Naive thymus-derived CD8-positive, alpha-beta T cell (primary cell): ENCODE measurements at regions of chr19 and their contacts with region 1.

Region 1: DNA sequence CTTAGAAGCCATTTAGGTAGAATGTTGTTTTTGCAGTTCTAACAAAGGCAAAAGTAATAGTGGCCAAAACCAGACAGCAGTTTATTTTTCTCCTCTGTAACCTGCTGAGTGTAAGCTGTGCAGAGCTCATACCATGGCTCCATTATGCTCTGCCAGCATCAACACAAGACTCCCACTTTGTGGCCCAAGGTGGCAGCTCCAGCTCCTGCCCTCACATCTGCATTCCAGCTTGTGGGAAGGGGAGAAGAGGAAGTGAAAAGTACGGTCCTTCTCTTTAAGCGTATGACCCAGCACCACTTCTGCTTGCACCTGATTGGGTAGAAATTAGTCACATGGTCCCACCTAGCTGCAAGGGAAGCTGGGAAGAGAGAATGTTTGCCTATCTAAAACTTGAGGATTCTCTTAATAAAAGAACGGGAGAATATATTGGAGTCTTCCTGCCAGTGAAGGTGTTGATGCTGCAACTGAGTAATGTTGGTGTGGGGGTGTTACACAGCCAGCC is 19.2 kb downstream of the ADGRE1 start:
- DNase-seq: no peak
- ATAC-seq: no peak
- H3K4me3 Mint-ChIP-seq: no peak overlapping the region
- H3K27ac Mint-ChIP-seq: no peak overlapping the region
- H3K4me1 Mint-ChIP-seq: peaks cover 0 to 6% (median 3%) of the 10 kb centered on the region in 4 donors
- H3K27me3 Mint-ChIP-seq: no peaks in the 10 kb centered on the region

Region 2: GRCh38 chr19:6710273-6711077 is 196.1 kb before region 1 on chr19:
- POLR2A ChIA-PET with region 1: no interaction called
- DNase-seq: peak in 1 of 10 donors; percentile 12
- ATAC-seq: peak; percentile 44 to 45
- H3K4me3 Mint-ChIP-seq: peak overlapping the region in 7 of 10 donors; percentile 19 to 66 (median 36)
- H3K27ac Mint-ChIP-seq: peak overlapping the region in 2 of 10 donors; percentile 46 to 75
- H3K4me1 Mint-ChIP-seq: peaks cover 15 to 17% (median 16%) of the 10 kb centered on the region in 4 donors
- H3K27me3 Mint-ChIP-seq: peaks cover 6 to 43% (median 34%) of the 10 kb centered on the region in 5 donors

Region 3: GRCh38 chr19:6856749-6857372 is 49.7 kb before region 1 on chr19:
- POLR2A ChIA-PET with region 1: no interaction called
- DNase-seq: no peak
- ATAC-seq: no peak
- H3K4me3 Mint-ChIP-seq: no peak overlapping the region
- H3K27ac Mint-ChIP-seq: peak overlapping the region in 8 of 10 donors; percentile 30 to 82 (median 58)
- H3K4me1 Mint-ChIP-seq: peaks cover 2 to 7% (median 4%) of the 10 kb centered on the region in 4 donors
- H3K27me3 Mint-ChIP-seq: no peaks in the 10 kb centered on the region

Region 4: GRCh38 chr19:6868351-6868750 is 38.3 kb before region 1 on chr19:
- POLR2A ChIA-PET with region 1: interaction called, 10 read pairs
- DNase-seq: no peak
- ATAC-seq: no peak
- H3K4me3 Mint-ChIP-seq: peak overlapping the region in 5 of 10 donors; percentile 18 to 51 (median 47)
- H3K27ac Mint-ChIP-seq: peak overlapping the region in 5 of 10 donors; percentile 8 to 66 (median 42)
- H3K4me1 Mint-ChIP-seq: peaks cover 12 to 30% (median 26%) of the 10 kb centered on the region in 4 donors
- H3K27me3 Mint-ChIP-seq: peaks cover 0 to 1% (median 0%) of the 10 kb centered on the region in 5 donors

Region 5: DNA sequence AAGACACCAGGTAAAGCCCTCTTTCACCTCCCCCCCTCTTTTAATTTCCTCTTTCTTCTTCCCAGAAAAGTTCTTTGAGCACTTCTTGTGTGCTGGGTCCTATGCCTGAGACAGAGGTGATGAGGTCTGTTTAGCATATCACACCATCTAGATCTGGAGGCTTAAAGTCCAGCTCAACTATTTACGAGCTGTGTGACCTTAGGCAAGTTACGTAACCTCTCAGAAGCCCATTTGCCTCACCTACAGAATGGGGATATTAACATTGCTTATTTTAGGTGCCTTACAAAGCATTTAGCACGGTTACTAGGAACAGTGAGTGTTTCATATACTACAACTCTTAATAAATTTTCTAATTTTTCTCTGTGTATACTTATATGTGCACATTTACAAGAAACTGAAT is 28.5 kb after region 1 on chr19:
- POLR2A ChIA-PET with region 1: no interaction called
- DNase-seq: no peak
- ATAC-seq: no peak
- H3K4me3 Mint-ChIP-seq: no peak overlapping the region
- H3K27ac Mint-ChIP-seq: no peak overlapping the region
- H3K4me1 Mint-ChIP-seq: no peaks in the 10 kb centered on the region
- H3K27me3 Mint-ChIP-seq: no peaks in the 10 kb centered on the region